Activated T-helper 1 cell treated with anti-CD3 and anti-CD28 coated beads, Interleukin-12 subunit alpha, Interleukin-12 subunit beta, Interleukin-2, Interleukin-4 antibody, amounts not matched to agents 30 ng/mL and 10 ng/mL and 1 ng/mL, durations not matched to agents 14 hours and 24 hours and 36 hours (primary cell): ENCODE measurements at regions of chr11 and their contacts with region 1.

Region 1: DNA sequence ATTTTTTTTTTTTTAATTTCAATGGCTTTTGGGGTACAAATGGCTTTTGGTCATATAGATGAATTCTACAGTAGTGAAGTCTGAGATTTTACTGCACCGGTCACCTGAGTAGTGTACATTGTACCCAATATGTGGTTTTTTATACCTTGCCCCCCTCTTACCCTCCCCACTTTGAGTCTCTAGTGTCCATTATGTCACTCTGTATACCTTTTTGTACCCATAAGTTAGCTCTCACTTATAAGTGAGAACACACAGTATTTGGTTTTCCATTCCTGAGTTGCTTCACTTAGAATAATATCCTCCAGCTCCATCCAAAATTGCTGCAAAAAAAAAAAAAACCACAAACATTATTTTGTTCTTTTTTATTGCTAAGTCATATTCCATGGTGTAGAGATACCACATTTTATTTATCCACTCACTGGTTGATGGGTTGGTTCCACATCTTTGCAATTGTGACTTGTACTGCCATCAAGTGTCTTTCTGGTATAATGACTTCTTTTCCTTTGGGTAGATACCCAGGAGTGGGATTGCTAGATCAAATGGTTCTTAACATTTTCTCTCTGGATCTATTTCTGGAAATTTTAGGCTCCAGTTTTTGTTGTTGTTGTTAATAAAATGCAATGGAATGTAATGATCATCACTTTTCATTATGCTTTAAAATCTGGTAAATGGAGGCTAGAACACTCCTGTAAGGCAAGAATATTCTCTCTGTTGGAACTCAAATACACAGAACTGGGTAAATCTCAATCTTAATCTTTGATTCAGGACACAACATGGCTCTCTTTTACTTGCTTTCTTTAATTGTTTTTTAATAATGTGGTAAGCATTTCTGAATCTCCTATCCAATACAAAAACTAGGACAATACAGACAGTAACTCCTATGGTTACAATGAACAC is 10.3 kb downstream of the NEAT1 start:
- DNase-seq: no peak
- H3K4me3 Mint-ChIP-seq: peak overlapping the region; percentile 45
- H3K27ac Mint-ChIP-seq: peak overlapping the region; percentile 75
- H3K4me1 Mint-ChIP-seq: peaks cover 91% of the 10 kb centered on the region
- H3K27me3 Mint-ChIP-seq: no peaks in the 10 kb centered on the region

Region 2: DNA sequence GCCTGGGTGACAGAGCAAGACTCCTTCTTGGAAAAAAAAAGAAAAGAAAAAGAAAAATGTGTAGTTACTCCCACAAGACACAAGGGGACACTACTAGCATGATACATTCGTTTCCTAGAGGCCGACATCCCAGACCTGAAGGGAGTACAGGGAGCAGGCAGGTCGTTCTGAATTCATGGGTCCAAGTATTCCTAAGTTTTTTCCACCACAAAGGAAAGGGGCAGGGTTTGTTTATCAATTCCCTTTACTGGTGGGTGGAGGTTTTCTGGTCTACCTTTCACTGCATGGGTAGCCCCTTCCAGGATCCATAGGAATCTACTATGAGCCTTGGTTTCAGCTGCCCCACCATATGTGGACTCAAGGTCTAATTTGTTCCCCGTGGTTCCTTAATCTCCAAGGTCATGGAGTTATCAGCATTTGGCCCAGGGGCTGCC is 66.6 kb before region 1 on chr11:
- intact Hi-C with region 1: loop called (anchors 1 kb)
- DNase-seq: no peak
- H3K4me3 Mint-ChIP-seq: no peak overlapping the region
- H3K27ac Mint-ChIP-seq: no peak overlapping the region
- H3K4me1 Mint-ChIP-seq: no peaks in the 10 kb centered on the region
- H3K27me3 Mint-ChIP-seq: no peaks in the 10 kb centered on the region